CD8-positive, alpha-beta memory T cell (primary cell): ENCODE measurements at regions of chr19 and their contacts with region 1.

Region 1: GRCh38 chr19:45059278-45059965 is 16.9 kb downstream of the ZNF296 start:
- DNase-seq: peak; percentile 70 to 85 (median 78)
- H3K4me3 ChIP-seq: no peak overlapping the region
- H3K4me3 Mint-ChIP-seq: no peak overlapping the region
- H3K27ac ChIP-seq: no peak overlapping the region
- H3K27ac Mint-ChIP-seq: peak overlapping the region in 7 of 8 donors; percentile 48 to 97 (median 83)
- H3K4me1 ChIP-seq: no peaks in the 10 kb centered on the region
- H3K4me1 Mint-ChIP-seq: peaks cover 4 to 8% (median 5%) of the 10 kb centered on the region in 3 donors
- H3K27me3 ChIP-seq: no peaks in the 10 kb centered on the region
- H3K27me3 Mint-ChIP-seq: no peaks in the 10 kb centered on the region

Region 2: DNA sequence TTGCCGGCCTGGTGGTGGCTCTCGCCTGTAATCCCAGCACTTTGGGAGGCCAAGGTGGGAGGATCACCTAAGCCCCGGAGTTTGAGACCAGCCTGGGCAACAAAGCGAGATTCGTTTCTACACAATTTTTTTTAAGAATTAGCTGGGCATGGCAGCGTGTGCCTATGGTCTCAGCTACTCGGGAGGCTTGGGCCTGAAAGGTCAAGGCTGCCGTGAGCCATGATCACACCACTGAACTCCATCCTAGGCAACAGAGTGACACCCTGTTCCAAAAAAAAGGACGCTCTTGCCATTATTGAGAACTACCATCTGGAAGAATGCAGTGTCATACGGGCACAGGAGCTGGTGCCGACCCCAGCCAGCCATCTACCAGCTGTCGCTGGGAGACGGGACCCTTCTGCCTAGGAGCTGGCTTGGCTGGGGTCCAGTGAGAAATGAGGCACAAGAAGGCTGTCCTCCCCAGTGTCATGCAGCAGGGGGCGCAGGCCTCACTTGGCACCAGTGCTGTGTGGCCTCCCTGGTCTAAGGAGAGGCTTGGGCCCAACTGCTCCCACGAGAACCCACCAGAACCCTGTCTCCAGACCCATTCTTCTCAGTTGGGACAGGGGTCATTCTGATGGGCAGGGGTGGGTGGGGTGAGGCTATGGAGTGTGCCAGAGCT is 70.4 kb before region 1 on chr19:
- CTCF ChIA-PET with region 1: interaction called, 17 read pairs
- POLR2A ChIA-PET with region 1: no interaction called
- DNase-seq: peak; percentile 44 to 82 (median 55)
- H3K4me3 ChIP-seq: no peak overlapping the region
- H3K4me3 Mint-ChIP-seq: no peak overlapping the region
- H3K27ac ChIP-seq: no peak overlapping the region
- H3K27ac Mint-ChIP-seq: peak overlapping the region in 6 of 8 donors; percentile 54 to 81 (median 62)
- H3K4me1 ChIP-seq: no peaks in the 10 kb centered on the region
- H3K4me1 Mint-ChIP-seq: no peaks in the 10 kb centered on the region
- H3K27me3 ChIP-seq: no peaks in the 10 kb centered on the region
- H3K27me3 Mint-ChIP-seq: peaks cover 0 to 3% of the 10 kb centered on the region in 2 donors

Region 3: DNA sequence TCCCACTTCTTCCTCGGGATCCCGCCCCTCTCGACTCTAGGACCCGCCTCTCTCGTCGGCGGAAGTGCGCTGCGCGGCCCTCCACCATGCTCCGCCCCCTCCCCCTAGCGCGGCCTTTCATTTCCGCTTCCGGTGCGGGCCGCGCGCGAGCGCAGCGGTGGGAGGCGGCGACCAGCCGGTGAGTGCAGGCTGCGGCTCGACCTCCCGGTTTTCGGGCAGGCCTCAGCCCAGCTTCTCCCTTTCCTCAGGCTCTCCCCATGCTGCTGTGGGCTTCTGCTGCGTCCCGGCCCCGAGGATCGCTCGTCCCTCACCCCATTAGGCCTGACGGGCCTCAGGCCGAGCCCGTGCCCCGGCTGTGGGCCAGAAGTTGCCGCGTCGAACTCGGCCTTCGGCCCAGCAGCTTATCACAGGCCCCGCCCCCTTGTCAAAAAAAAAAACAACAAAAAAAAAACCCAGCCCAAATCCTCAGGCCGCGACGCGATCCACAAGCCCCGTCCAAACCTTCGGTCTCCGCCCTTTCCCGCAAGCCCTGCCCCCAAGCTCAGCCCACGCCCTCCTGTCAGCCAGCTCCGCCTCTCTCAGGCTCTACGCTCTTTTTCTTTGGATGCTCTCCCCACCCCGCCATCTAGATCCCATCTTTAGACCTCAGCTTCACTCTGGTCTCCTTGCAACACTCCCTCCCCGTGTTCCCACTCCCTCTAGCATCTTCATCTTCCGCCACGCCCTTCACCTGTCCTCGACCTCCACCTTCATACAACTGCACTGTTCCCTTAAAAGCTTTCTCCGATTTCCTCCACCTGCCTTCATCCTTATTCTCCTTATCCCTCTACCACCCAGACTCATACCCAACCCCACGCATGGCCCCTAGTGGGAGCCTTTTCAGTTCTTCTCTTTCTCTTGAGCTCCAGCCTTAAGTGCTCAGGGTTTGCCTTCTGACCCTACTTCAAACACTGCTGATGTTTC is 20.2 kb before region 1 on chr19 and contains the start of gene CLASRP:
- CTCF ChIA-PET with region 1: interaction called, 13 read pairs
- POLR2A ChIA-PET with region 1: no interaction called
- DNase-seq: peak; percentile 83 to 90 (median 85)
- H3K4me3 ChIP-seq: peak within 1 kb of the TSS; percentile 95
- H3K4me3 Mint-ChIP-seq: peak within 1 kb of the TSS; percentile 86 to 100 (median 94)
- H3K27ac ChIP-seq: peak within 1 kb of the TSS; percentile 98
- H3K27ac Mint-ChIP-seq: peak within 1 kb of the TSS; percentile 79 to 100 (median 95)
- H3K4me1 ChIP-seq: peaks cover 24% of the 10 kb centered on the region
- H3K4me1 Mint-ChIP-seq: peaks cover 32 to 43% (median 32%) of the 10 kb centered on the region in 3 donors
- H3K27me3 ChIP-seq: no peaks in the 10 kb centered on the region
- H3K27me3 Mint-ChIP-seq: peaks cover 0 to 2% of the 10 kb centered on the region in 2 donors
- total RNA-seq, gene CLASRP: 75.5 to 84.1 TPM